ENCODE measurements at regions of chr17 and their contacts with region 1.

Region 1: GRCh38 chr17:81484195-81484979 is 28.2 kb downstream of the ACTG1 start:
- DNase-seq: peak; percentile 63 to 92 (median 72)
- ATAC-seq: peak; percentile 74
- H3K4me3 ChIP-seq: peak overlapping the region; percentile 42
- H3K27ac ChIP-seq: peak overlapping the region; percentile 85
- H3K4me1 ChIP-seq: peaks cover 36 to 85% of the 10 kb centered on the region in 2 experiments
- H3K27me3 ChIP-seq: no peaks in the 10 kb centered on the region; a peak in 1 of 5 replicates
- CTCF ChIP-seq: peak; percentile 88 to 97 (median 96)
- EP300 ChIP-seq: no peak; the same call in 1 of the 2 replicates
- POLR2A ChIP-seq: peak; percentile 68
- RAD21 ChIP-seq: peak; percentile 94 to 96

Region 2: DNA sequence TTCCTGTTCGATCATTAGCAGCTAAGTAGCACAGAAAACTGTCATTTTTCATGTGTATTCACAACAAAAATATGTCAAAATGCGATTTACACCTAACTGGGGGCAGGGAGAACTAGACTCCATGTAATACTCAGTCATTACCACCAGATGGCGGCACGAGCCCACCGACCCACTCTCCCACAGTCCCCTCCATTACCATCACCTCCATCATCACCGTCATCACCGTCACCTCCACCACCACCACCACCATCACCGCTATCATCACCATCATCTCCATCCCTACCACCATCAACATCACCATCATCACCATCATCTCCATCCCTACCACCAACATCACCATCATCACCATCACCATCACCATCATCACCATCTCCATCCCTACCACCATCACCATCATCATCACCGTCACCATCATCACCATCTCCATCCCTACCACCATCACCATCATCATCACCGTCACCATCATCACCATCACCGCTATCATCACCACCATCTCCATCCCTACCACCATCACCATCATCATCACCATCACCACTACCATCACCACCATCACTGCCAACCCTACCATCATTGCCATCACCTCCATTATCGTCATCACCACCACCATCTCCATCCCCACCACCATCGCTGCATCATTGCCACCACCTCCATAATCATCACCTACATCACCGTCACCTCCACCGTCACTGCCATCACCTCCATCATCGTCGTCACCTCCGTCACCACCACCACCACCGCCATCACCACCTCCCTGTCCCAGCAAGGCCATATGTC is 230.8 kb before region 1 on chr17:
- CTCF ChIA-PET with region 1: interaction called, 33 read pairs
- POLR2A ChIA-PET with region 1: no interaction called
- in situ Hi-C with region 1: loop called (anchors 5 kb)
- intact Hi-C with region 1: loop called (anchors 2 kb)
- DNase-seq: peak; percentile 66 to 77 (median 72)
- ATAC-seq: peak; percentile 83
- H3K4me3 ChIP-seq: no peak overlapping the region
- H3K27ac ChIP-seq: no peak overlapping the region
- H3K4me1 ChIP-seq: peaks cover 0 to 44% of the 10 kb centered on the region in 2 experiments; a peak in 1 of 5 replicates
- H3K27me3 ChIP-seq: no peaks in the 10 kb centered on the region
- CTCF ChIP-seq: peak; percentile 82 to 90 (median 86)
- EP300 ChIP-seq: no peak
- POLR2A ChIP-seq: 0 out of 2 replicates have a peak, but pooled peaks have one; percentile 26
- RAD21 ChIP-seq: peak; percentile 82 to 89

Region 3: GRCh38 chr17:81394921-81395599 is 89.3 kb before region 1 on chr17 and contains the start of gene BAHCC1:
- CTCF ChIA-PET with region 1: interaction called, 5 read pairs
- POLR2A ChIA-PET with region 1: interaction called, 8 read pairs
- in situ Hi-C with region 1: loop called (anchors 5 kb)
- intact Hi-C with region 1: no loop called
- DNase-seq: peak; percentile 89 to 99 (median 92)
- ATAC-seq: peak; percentile 78
- H3K4me3 ChIP-seq: peak within 1 kb of the TSS; percentile 20
- H3K27ac ChIP-seq: peak within 1 kb of the TSS; percentile 57
- H3K4me1 ChIP-seq: peaks cover 17 to 88% of the 10 kb centered on the region in 2 experiments
- H3K27me3 ChIP-seq: no peaks in the 10 kb centered on the region
- CTCF ChIP-seq: no peak
- EP300 ChIP-seq: no peak
- POLR2A ChIP-seq: peak; percentile 55; the same call in 1 of the 2 replicates
- RAD21 ChIP-seq: no peak
- polyA plus RNA-seq, gene BAHCC1: 0.14 to 0.24 TPM

Region 4: DNA sequence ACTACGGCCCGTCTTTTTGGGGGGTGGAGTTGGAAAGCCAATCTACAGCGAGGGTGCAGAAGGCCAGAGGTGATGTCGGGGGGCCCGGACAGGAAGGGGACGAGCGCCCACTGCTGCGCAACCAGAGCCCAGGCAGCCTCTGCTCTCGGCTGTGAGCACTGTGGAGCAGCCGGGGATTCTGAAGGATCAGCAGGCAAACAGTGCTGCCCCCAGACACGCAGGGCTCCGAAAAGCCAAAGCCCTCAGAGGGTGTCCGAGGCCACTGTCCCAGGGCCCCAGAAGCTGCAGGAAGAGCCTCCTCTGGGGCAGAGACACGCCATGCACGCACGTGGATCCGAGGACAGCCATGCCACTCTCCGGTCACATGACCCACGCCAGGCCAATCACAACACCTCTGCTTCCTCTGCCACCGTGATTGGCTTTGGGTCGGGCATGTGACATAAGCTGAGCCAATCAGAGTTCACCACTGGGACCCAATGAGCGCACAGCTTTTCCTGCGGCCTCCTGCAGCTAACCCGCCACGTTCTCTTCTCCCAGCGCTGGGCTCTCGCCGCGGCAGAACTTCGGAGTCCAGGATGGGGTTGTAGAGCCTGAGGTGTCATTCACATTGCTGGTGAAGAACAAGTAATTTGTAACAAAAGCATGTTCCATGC is 12.5 kb before region 1 on chr17:
- CTCF ChIA-PET with region 1: no interaction called
- POLR2A ChIA-PET with region 1: interaction called, 18 read pairs
- in situ Hi-C with region 1: no loop called
- intact Hi-C with region 1: no loop called
- DNase-seq: peak; percentile 95 to 99 (median 98)
- ATAC-seq: peak; percentile 99
- H3K4me3 ChIP-seq: peak overlapping the region; percentile 19; the same call in 1 of the 2 replicates
- H3K27ac ChIP-seq: peak overlapping the region; percentile 81
- H3K4me1 ChIP-seq: peaks cover 0 to 45% of the 10 kb centered on the region in 2 experiments; a peak in 3 of 5 replicates
- H3K27me3 ChIP-seq: no peaks in the 10 kb centered on the region
- CTCF ChIP-seq: peak; percentile 55 to 56 (median 55); a peak in 4 of 6 replicates
- EP300 ChIP-seq: no peak
- POLR2A ChIP-seq: peak; percentile 73
- RAD21 ChIP-seq: peak; percentile 90

Region 5: DNA sequence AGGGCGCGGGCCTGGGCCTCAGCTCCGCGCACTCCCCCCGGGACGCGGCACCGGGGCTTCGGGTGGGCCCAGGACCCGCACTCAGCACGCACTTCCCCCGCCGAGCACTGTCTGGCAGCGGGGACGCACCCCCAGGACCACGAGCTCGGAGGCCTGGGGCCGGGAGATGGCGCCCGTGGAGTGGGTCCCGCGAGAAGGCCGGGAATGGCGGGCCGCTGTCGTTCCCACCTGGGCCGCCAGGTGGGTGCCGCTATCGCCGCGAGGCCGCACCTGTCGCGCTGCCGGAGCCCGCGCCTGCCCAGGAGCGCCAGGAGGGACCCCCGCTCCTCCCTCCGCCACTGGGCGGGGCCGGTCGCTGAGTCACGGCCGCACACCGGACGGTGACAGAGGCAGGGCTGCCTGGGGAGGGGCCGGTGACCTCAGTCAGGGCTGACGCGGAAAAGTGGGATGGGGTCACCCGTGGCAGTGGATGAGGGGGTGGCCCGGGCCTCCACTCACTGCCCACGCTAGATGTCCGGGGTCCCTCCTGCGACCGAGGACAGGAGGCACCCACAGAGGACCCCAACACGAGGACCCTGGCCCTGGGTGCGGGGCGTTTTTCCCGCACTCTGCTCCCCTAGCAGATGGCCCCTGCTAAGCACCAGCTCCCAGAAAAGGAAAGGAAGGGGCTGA is 35.0 kb after region 1 on chr17:
- CTCF ChIA-PET with region 1: interaction called, 5 read pairs
- POLR2A ChIA-PET with region 1: no interaction called
- in situ Hi-C with region 1: no loop called
- intact Hi-C with region 1: loop called (anchors 5 kb)
- DNase-seq: peak; percentile 83 to 91 (median 86)
- ATAC-seq: peak; percentile 90
- H3K4me3 ChIP-seq: peak overlapping the region; percentile 46
- H3K27ac ChIP-seq: peak overlapping the region; percentile 67; the same call in 2 of the 3 replicates
- H3K4me1 ChIP-seq: peaks cover 5 to 71% of the 10 kb centered on the region in 2 experiments; a peak in 4 of 5 replicates
- H3K27me3 ChIP-seq: peaks cover 0 to 5% of the 10 kb centered on the region in 2 experiments; a peak in 1 of 5 replicates
- CTCF ChIP-seq: peak; percentile 38 to 74 (median 46); a peak in 5 of 6 replicates
- EP300 ChIP-seq: no peak
- POLR2A ChIP-seq: 0 out of 2 replicates have a peak, but pooled peaks have one; percentile 30
- RAD21 ChIP-seq: peak in 1 of 2 experiments; percentile 30; a peak in 2 of 4 replicates

Region 6: GRCh38 chr17:81543339-81543675 is 58.9 kb after region 1 on chr17:
- CTCF ChIA-PET with region 1: no interaction called
- POLR2A ChIA-PET with region 1: no interaction called
- in situ Hi-C with region 1: no loop called
- intact Hi-C with region 1: no loop called
- DNase-seq: no peak
- ATAC-seq: no peak
- H3K4me3 ChIP-seq: no peak overlapping the region
- H3K27ac ChIP-seq: no peak overlapping the region
- H3K4me1 ChIP-seq: peaks cover 0 to 43% of the 10 kb centered on the region in 2 experiments; a peak in 1 of 5 replicates
- H3K27me3 ChIP-seq: no peaks in the 10 kb centered on the region
- CTCF ChIP-seq: no peak
- EP300 ChIP-seq: no peak
- POLR2A ChIP-seq: no peak
- RAD21 ChIP-seq: no peak